Activated T-helper 1 cell treated with anti-CD3 and anti-CD28 coated beads, Interleukin-12 subunit alpha, Interleukin-12 subunit beta, Interleukin-2, Interleukin-4 antibody, amounts not matched to agents 30 ng/mL and 10 ng/mL and 1 ng/mL, durations not matched to agents 14 hours and 24 hours and 36 hours (primary cell): ENCODE measurements at regions of chr1 and their contacts with region 1.

Region 1: GRCh38 chr1:201222125-201222524 is 31.5 kb downstream of the IGFN1 start:
- DNase-seq: no peak
- H3K4me3 Mint-ChIP-seq: no peak overlapping the region
- H3K27ac Mint-ChIP-seq: no peak overlapping the region
- H3K4me1 Mint-ChIP-seq: no peaks in the 10 kb centered on the region
- H3K27me3 Mint-ChIP-seq: no peaks in the 10 kb centered on the region

Region 2: GRCh38 chr1:201149400-201149799 is 72.7 kb before region 1 on chr1:
- intact Hi-C with region 1: loop called (anchors 1 kb)
- DNase-seq: no peak
- H3K4me3 Mint-ChIP-seq: no peak overlapping the region
- H3K27ac Mint-ChIP-seq: no peak overlapping the region
- H3K4me1 Mint-ChIP-seq: peaks cover 18% of the 10 kb centered on the region
- H3K27me3 Mint-ChIP-seq: peaks cover 5% of the 10 kb centered on the region

Region 3: GRCh38 chr1:201709564-201710295 is 487.6 kb after region 1 on chr1:
- intact Hi-C with region 1: no loop called
- DNase-seq: peak; percentile 30
- H3K4me3 Mint-ChIP-seq: no peak overlapping the region
- H3K27ac Mint-ChIP-seq: no peak overlapping the region
- H3K4me1 Mint-ChIP-seq: no peaks in the 10 kb centered on the region
- H3K27me3 Mint-ChIP-seq: peaks cover 5% of the 10 kb centered on the region